GM18951 (cell line): ENCODE measurements at regions of chr10 and their contacts with region 1.

Region 1: DNA sequence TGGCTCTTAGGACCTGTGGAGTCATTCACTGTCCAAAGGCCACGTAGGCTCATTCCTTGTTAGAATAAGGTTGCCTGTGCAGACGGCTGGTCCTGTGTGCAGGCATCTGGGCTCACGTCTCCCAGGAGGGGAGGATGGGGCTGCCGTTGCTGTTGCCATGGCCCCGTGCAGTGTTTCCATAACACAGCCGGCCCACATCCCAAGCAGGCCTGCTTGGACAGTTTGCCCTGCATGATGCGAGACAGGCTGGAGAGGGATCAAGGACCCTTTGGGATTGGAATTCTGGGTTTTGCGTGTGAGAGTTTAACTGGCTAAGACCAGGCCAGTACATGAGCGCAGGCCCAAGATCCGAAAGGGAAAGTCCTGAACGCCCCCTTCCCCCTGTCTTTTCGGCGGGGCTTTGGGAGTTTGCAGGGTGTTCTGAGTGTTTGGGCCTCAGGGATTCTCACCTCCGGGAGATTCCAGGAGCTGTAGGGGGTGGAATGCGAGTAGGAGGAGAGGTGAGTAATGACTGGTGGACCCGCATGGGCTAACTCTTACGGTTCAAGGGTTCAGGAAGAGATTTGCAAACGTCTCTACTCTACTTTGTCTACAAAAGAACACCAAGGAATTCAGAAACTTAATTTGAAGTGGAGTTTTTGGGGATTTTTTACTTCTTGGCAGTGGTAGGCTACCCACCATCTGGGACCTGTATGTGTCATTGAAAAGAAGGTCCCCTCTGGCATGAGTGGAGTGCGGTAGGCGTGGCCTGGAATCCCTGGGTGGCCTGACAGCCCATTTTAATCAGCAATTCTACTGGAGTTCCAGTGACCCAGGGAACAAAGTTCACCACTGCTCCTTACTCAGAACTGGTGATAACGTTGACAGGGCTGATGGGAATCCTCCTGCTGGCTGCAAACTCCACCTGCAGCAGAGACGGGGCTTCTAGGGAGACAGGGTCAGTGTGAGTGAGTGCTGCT is 125.3 kb downstream of the ITIH5 start:
- POLR2A ChIP-seq: no peak

Region 2: GRCh38 chr10:7432884-7433726 is 108.3 kb before region 1 on chr10:
- in situ Hi-C with region 1: no loop called
- POLR2A ChIP-seq: no peak

Region 3: GRCh38 chr10:7671121-7671520 is 129.7 kb after region 1 on chr10:
- in situ Hi-C with region 1: loop called (anchors 10 kb)
- POLR2A ChIP-seq: no peak